Activated CD4-positive, alpha-beta memory T cell treated with anti-CD3 and anti-CD28 coated beads, Interleukin-2, amount 10 ng/mL, durations not matched to agents 7 days and 5 days (primary cell): ENCODE measurements at regions of chr1 and their contacts with region 1.

Region 1: DNA sequence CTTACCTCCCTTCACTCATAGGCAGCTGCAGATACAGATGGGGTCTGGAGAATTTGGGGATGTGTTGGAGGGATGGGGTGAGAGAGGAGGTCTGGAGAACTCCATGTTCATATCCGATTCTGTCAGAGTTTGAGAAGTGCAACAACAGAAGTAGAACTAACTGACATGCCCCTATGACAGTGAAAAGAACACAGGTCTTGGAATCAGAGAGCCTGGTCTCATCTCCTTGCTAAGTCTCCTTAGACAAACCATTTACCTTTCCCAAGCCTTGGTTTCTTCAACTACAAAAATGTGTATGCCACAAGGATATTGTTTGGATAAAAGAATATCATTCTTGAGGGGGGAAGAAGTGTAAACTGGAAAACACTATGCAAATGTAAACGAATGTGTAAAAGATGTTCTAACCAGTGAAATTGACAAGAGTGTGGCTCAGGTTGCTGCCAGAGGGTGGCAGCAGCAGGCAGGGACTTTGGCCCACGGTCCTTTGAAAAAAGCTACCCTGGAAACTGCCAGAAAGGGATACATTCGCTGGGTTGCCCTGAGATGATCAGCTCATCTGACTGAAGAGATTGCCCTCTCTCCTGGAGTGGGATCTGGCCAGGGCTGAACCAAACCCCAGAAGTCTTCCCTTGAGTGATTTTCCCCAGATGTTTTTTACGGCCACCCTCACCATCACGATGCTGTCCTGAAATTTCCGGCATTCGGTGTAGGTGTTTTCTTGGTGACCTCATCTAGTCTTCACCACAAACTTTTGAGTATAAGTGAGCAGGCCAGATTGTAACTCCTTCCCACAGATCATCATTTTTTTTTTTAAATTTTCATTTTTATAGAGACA is 17.0 kb upstream of the CD2 start:
- DNase-seq: peak; percentile 85
- H3K4me3 Mint-ChIP-seq: peak overlapping the region; percentile 68
- H3K27ac Mint-ChIP-seq: peak overlapping the region; percentile 99
- H3K4me1 Mint-ChIP-seq: peaks cover 57% of the 10 kb centered on the region
- H3K27me3 Mint-ChIP-seq: no peaks in the 10 kb centered on the region

Region 2: DNA sequence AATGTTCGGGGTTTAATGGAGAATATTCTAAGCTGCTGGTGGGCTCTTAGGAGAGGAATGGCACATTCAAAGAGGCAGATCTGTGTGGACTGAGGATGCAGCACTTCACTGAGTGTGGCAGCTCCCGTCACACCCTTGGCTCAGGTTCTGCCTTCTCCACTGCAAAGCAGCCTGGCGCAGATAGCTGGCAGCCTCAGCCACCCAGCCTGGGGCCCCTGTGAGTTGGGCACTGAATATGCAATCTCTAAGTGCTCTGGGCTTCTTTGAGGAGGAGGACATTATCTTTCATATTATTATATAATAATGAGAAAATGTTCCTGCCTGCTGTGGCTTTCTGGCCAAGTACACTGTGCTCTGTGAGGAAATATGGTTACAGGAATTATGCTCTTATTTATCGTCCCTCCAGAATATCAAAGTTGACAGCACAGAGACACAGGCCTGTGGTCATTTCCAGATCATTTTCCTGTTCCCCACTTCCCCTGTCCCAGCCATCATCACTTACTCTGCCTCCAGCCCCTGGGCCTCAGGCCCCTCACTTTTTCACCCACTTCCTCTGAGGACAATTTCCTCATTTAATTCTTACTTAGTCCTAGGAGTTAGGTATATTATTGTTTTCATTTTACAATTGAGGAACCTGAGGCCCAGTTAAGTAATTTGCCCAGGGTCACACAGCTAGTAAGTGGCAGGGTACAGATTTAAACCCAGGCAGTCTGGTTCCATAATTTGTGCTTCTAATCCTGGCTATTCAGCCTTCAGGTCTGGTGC is 572.5 kb before region 1 on chr1:
- CTCF ChIA-PET with region 1: no interaction called
- POLR2A ChIA-PET with region 1: no interaction called
- DNase-seq: no peak
- H3K4me3 Mint-ChIP-seq: no peak overlapping the region
- H3K27ac Mint-ChIP-seq: no peak overlapping the region
- H3K4me1 Mint-ChIP-seq: peaks cover 14% of the 10 kb centered on the region
- H3K27me3 Mint-ChIP-seq: peaks cover 8% of the 10 kb centered on the region

Region 3: DNA sequence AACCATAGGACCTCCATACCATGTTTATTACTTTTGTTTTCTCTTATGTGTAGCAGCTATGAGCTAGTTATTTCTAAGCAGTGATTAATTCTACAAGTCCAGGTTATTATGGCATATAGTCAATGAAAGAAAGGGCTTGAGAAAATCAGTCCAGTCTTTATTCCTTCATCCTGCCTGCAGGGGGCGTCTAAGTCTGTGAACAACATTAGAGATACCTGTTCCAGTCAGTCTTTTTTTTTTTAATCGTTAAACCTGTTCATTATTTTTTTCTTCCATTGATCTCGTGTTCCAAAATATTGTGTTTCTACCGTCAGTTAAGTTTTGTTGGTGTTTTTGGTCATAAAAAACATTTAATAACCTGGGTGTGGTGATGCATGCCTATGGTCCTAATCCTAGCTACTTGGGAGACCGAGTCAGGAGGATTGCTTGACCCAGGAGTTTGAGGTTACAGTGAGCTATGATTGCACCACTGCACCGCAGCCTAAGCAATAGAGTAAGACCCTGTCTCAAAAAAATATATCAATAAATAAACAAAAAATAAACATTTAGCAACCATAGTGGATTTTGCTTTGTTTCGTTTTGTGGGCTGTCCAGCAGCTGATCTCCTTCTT is 12.4 kb before region 1 on chr1:
- CTCF ChIA-PET with region 1: interaction called, 14 read pairs
- POLR2A ChIA-PET with region 1: interaction called, 7 read pairs
- DNase-seq: peak; percentile 81
- H3K4me3 Mint-ChIP-seq: no peak overlapping the region
- H3K27ac Mint-ChIP-seq: no peak overlapping the region
- H3K4me1 Mint-ChIP-seq: peaks cover 23% of the 10 kb centered on the region
- H3K27me3 Mint-ChIP-seq: no peaks in the 10 kb centered on the region

Region 4: GRCh38 chr1:116763787-116764465 is 26.7 kb after region 1 on chr1:
- CTCF ChIA-PET with region 1: interaction called, 121 read pairs
- POLR2A ChIA-PET with region 1: interaction called, 283 read pairs
- DNase-seq: peak; percentile 67
- H3K4me3 Mint-ChIP-seq: peak overlapping the region; percentile 78
- H3K27ac Mint-ChIP-seq: peak overlapping the region; percentile 99
- H3K4me1 Mint-ChIP-seq: peaks cover 96% of the 10 kb centered on the region
- H3K27me3 Mint-ChIP-seq: no peaks in the 10 kb centered on the region

Region 5: DNA sequence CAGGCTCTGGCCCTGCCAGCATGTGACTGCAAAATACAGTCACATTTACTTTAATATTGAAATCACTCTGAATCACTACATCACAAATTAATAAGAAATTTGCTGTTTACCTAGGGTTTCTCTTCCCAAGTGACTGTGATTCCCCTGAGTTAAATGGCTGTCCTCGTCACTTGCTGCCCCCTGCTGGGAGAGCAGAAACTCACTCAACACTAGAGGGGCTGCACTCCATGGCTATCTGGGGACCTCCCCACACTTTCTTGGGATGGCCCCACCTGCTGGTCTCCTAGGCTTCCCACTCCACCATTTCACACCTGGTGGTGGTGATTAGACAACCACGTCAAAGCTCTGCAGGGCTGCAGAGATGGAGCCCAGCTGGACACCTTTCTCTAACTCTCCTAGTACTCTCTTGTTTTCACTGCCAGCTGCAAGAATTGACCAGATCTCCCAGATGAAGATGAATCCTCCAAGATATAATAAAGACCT is 80.4 kb after region 1 on chr1:
- CTCF ChIA-PET with region 1: interaction called, 134 read pairs
- POLR2A ChIA-PET with region 1: interaction called, 97 read pairs
- DNase-seq: peak; percentile 78
- H3K4me3 Mint-ChIP-seq: no peak overlapping the region
- H3K27ac Mint-ChIP-seq: peak overlapping the region; percentile 53
- H3K4me1 Mint-ChIP-seq: peaks cover 63% of the 10 kb centered on the region
- H3K27me3 Mint-ChIP-seq: no peaks in the 10 kb centered on the region

Region 6: GRCh38 chr1:116881879-116882520 is 144.8 kb after region 1 on chr1:
- CTCF ChIA-PET with region 1: interaction called, 46 read pairs
- POLR2A ChIA-PET with region 1: interaction called, 17 read pairs
- DNase-seq: peak; percentile 53
- H3K4me3 Mint-ChIP-seq: no peak overlapping the region
- H3K27ac Mint-ChIP-seq: no peak overlapping the region
- H3K4me1 Mint-ChIP-seq: peaks cover 5% of the 10 kb centered on the region
- H3K27me3 Mint-ChIP-seq: no peaks in the 10 kb centered on the region

Region 7: GRCh38 chr1:116987256-116987555 is 250.0 kb after region 1 on chr1:
- CTCF ChIA-PET with region 1: interaction called, 13 read pairs
- POLR2A ChIA-PET with region 1: interaction called, 12 read pairs
- DNase-seq: peak; percentile 71
- H3K4me3 Mint-ChIP-seq: peak overlapping the region; percentile 63
- H3K27ac Mint-ChIP-seq: peak overlapping the region; percentile 51
- H3K4me1 Mint-ChIP-seq: peaks cover 29% of the 10 kb centered on the region
- H3K27me3 Mint-ChIP-seq: peaks cover 2% of the 10 kb centered on the region